Ascending aorta (tissue), 2 donors: ENCODE measurements at regions of chr5 and their contacts with region 1.

Region 1: DNA sequence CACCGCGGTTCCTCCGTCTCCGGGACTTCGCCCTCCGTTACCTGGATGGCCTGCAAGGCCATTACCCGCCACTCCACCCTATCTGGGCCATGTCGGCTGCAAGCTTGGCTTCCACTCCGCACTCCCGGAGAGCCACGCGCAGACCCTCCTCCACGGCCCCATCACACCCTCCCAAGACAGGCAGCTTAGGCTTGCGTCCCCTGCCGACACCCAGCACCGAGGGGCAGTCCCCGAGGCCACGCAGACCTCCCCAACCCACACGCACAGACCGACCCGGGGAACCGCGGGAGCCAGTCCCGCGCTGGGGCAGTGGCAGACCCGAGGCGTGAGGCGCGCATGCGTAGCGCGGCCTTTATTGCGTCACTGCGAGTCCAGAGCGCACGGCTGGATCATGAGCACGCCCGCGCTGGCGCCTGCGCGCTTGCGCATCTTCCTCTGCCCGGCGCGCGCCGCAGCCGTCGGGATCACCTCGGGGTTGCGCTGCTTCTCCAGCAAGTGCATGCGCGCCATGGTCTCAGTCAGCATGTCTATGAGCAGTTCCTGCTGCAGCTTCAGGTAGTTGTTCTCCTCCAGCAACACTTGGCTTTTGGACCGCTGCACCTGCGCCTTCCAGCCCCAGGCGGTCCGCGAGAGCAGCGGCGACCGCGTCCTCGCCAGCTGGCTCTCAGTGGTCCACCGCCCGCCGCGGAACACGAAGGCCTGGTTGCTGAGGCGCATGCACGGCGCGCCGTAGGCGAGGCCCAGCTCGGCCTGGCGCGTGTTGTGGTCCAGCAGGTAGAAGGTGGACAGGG is 2.4 kb downstream of the CBY3 start:
- DNase-seq: peak; percentile 86 to 97
- H3K4me3 ChIP-seq: peak overlapping the region; percentile 90 to 94
- H3K27ac ChIP-seq: peak overlapping the region; percentile 81 to 88
- H3K4me1 ChIP-seq: peaks cover 0 to 18% of the 10 kb centered on the region in 2 donors
- H3K27me3 ChIP-seq: no peaks in the 10 kb centered on the region
- CTCF ChIP-seq: peak in 1 of 3 experiments; percentile 4

Region 2: GRCh38 chr5:179608131-179608581 is 70.3 kb before region 1 on chr5:
- intact Hi-C with region 1: no loop called
- DNase-seq: no peak
- H3K4me3 ChIP-seq: no peak overlapping the region
- H3K27ac ChIP-seq: peak overlapping the region in 1 of 2 donors; percentile 11
- H3K4me1 ChIP-seq: peaks cover 0 to 8% of the 10 kb centered on the region in 2 donors
- H3K27me3 ChIP-seq: no peaks in the 10 kb centered on the region
- CTCF ChIP-seq: no peak

Region 3: DNA sequence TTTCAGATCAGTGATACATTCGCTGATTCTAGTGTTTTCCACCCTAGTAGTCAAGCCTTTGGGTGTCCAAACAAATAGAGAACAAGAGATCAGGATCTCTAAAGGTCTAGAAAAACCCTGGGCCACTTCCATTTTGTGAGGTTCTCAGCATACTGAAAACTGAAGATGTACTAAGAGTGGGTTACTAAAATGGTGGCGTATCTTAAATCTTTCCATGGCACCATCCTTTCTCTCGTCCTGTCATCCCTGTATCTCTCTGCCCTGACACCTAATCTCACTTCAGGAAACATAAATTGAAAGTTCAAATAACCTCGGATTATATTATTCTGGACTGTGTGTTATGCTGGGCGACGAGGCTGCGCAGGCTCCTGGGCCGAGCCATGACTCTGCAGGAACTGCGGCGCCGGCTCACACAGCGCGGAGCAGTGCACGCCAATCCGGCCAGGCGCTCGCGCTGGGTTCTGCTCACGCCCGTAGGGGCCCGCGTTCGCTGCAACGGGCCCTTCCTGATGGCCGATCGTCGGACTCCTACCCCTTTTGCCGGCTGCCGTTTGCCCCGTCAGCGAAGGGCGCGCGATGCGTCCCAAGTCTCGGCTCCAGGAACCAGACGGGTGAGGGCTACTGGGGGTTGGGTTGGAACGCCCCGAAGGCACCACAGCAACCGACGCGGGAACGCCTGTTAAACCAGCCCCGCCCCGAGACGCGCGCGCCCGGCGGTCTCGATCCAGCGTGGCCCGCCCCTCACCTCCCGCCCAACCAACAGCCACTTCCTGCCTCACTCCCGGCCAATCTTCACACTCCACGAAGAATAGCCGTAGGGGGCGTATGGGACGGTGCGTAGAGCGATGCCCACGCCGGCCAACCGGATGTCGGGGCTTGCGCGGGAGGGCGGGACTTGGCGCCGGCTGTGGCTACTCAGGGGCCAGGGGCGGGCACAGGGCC is 19.8 kb after region 1 on chr5:
- intact Hi-C with region 1: loop called (anchors 1 kb)
- DNase-seq: peak; percentile 98 to 100
- H3K4me3 ChIP-seq: peak overlapping the region; percentile 90 to 94
- H3K27ac ChIP-seq: peak overlapping the region; percentile 98 to 99
- H3K4me1 ChIP-seq: peaks cover 0 to 11% of the 10 kb centered on the region in 2 donors
- H3K27me3 ChIP-seq: no peaks in the 10 kb centered on the region
- CTCF ChIP-seq: no peak

Region 4: DNA sequence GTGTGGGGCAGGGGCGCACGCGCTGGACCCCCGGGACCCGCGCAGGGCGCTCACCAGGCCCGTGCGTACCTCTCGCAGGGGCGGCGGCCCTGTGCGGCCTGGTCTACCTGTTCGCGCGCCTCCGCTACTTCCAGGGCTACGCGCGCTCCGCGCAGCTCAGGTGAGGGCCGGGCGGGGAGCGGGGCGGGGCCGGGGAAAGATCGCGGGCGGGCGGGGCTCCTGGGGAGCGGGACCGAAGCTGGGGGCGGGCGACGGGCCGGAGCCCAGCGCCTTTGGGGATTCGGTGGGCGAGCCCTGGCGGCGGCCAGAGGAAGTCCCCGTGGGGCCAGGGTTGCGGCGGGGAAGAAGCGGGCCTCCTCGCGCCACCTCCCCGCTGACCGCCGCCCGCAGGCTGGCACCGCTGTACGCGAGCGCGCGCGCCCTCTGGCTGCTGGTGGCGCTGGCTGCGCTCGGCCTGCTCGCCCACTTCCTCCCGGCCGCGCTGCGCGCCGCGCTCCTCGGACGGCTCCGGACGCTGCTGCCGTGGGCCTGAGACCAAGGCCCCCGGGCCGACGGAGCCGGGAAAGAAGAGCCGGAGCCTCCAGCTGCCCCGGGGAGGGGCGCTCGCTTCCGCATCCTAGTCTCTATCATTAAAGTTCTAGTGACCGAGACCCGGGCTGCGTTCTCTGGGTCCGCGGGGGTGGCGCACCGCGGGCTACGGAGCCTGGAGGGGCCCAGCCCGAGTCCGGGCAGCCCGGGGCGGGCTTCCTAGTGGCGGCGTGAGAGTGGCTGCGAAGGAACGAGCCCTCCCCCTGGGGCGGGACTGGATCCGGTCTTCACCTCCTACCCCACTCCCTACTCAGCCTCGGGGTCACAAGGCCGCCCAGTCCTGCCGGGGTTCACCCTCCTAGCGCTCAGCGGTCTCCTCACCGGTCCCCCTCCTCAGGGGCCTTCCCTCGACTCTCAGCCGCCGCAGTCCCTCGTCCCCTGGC is 117.7 kb after region 1 on chr5:
- intact Hi-C with region 1: loop called (anchors 5 kb)
- DNase-seq: peak in 1 of 2 donors; percentile 89
- H3K4me3 ChIP-seq: peak overlapping the region; percentile 68 to 75
- H3K27ac ChIP-seq: peak overlapping the region; percentile 75 to 79
- H3K4me1 ChIP-seq: peaks cover 12 to 29% of the 10 kb centered on the region in 2 donors
- H3K27me3 ChIP-seq: no peaks in the 10 kb centered on the region
- CTCF ChIP-seq: peak; percentile 25 to 90 (median 71)

Region 5: DNA sequence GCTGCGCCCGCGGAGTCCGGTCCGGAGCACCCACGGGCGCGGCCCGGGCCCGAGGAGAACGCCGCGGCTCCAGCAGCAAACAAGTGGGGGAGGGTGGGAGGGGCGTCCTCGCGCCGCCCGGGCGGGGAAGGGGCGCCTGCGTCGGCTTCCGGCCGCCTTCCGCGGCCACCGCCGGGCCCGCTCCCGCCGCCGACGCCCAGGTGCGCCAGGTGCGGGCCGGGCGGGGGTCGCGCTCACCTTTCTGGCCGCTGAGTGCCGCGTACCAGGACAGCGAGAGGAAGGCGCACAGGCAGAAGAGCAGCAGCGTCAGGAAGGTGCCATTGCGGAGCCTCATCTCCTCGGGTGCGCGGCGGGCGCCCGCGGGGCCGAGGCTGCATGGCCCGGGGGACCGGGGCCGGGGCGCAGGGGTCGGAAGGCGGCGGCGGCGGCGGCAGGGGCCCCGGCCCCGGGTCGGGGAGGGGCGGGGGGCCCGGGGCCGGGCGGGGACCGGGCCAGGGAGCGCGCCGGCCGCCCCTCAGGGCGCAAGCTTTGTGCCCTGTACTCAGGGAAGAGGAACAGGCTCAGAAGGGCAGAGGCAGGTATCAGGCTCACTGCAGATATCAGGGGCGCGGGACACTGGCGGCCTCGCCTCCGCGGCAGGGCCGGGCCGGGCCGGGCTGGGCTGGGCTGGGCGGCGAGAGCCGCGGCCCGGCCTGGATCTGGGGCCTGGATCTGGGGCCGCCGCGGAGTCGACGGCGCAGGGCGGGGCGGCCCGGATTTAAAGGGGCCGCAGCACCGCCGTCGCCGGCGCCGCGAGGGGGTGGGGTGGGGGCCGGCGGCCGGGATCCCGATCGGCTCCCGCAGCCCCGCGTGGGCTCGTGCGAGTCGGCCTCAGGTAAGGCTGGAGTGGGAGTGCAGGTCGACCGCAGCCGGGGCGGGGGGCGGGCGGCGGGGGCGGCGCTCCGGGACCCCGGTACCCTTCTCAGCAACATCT is 128.1 kb after region 1 on chr5 and contains the start of gene MGAT4B:
- intact Hi-C with region 1: no loop called
- DNase-seq: peak in 1 of 2 donors; percentile 84
- H3K4me3 ChIP-seq: peak within 1 kb of the TSS; percentile 78 to 87
- H3K27ac ChIP-seq: peak within 1 kb of the TSS; percentile 91
- H3K4me1 ChIP-seq: peaks cover 10 to 21% of the 10 kb centered on the region in 2 donors
- H3K27me3 ChIP-seq: no peaks in the 10 kb centered on the region
- CTCF ChIP-seq: no peak
- total RNA-seq, gene MGAT4B: 207 TPM